ENCODE measurements at regions of chr6 and their contacts with region 1.

Region 1: GRCh38 chr6:139468178-139468819 is 93.9 kb upstream of the CITED2 start:
- DNase-seq: no peak
- ATAC-seq: no peak

Region 2: GRCh38 chr6:139112146-139112545 is 356.2 kb before region 1 on chr6:
- intact Hi-C with region 1: loop called (anchors 5 kb)
- DNase-seq: no peak
- ATAC-seq: no peak

Region 3: GRCh38 chr6:139349464-139350020 is 118.8 kb before region 1 on chr6:
- intact Hi-C with region 1: no loop called
- DNase-seq: no peak
- ATAC-seq: no peak

Region 4: GRCh38 chr6:139553916-139554315 is 85.6 kb after region 1 on chr6:
- intact Hi-C with region 1: no loop called
- DNase-seq: no peak
- ATAC-seq: no peak